Activated CD4-positive, alpha-beta memory T cell treated with anti-CD3 and anti-CD28 coated beads for 36 hours (primary cell): ENCODE measurements at regions of chr5 and their contacts with region 1.

Region 1: DNA sequence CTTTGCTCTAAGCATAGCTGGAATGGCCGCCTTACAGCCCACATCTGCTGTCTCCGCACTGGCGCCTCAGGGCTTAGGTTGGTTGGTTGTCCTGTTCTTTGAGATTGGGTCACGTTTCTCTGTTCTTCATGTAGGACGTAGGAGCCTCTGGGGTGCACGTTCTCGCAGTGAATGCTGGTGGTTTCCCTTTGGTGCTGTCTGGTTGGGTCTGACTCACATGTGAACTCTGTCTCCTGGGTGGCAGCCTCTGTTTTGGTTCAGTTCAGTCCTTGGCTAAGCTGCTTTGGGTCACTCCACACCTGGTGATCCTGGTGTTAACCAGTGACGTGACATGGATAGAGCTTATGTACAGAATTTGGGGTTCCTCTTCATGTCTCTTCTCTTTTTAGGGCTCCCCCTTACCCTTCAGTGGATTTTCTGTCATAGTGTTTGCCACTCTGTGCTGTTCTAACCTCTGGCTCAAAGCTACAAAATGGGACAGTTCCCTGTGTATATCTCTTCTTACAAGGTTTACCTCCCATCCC is 12.6 kb upstream of the LPCAT1 start:
- DNase-seq: peak; percentile 86
- H3K4me3 Mint-ChIP-seq: peak overlapping the region; percentile 71
- H3K27ac Mint-ChIP-seq: peak overlapping the region; percentile 78
- H3K4me1 Mint-ChIP-seq: peaks cover 21% of the 10 kb centered on the region
- H3K27me3 Mint-ChIP-seq: no peaks in the 10 kb centered on the region

Region 2: GRCh38 chr5:892394-893136 is 643.8 kb before region 1 on chr5 and contains the starts of genes BRD9 and TRIP13:
- CTCF ChIA-PET with region 1: no interaction called
- POLR2A ChIA-PET with region 1: no interaction called
- intact Hi-C with region 1: no loop called
- DNase-seq: peak; percentile 89
- H3K4me3 Mint-ChIP-seq: peak within 1 kb of the TSS; percentile 85
- H3K27ac Mint-ChIP-seq: peak within 1 kb of the TSS; percentile 84
- H3K4me1 Mint-ChIP-seq: peaks cover 25% of the 10 kb centered on the region
- H3K27me3 Mint-ChIP-seq: no peaks in the 10 kb centered on the region
- total RNA-seq, gene BRD9: 43.1 to 50.7 TPM
- total RNA-seq, gene TRIP13: 32.4 to 33.9 TPM

Region 3: DNA sequence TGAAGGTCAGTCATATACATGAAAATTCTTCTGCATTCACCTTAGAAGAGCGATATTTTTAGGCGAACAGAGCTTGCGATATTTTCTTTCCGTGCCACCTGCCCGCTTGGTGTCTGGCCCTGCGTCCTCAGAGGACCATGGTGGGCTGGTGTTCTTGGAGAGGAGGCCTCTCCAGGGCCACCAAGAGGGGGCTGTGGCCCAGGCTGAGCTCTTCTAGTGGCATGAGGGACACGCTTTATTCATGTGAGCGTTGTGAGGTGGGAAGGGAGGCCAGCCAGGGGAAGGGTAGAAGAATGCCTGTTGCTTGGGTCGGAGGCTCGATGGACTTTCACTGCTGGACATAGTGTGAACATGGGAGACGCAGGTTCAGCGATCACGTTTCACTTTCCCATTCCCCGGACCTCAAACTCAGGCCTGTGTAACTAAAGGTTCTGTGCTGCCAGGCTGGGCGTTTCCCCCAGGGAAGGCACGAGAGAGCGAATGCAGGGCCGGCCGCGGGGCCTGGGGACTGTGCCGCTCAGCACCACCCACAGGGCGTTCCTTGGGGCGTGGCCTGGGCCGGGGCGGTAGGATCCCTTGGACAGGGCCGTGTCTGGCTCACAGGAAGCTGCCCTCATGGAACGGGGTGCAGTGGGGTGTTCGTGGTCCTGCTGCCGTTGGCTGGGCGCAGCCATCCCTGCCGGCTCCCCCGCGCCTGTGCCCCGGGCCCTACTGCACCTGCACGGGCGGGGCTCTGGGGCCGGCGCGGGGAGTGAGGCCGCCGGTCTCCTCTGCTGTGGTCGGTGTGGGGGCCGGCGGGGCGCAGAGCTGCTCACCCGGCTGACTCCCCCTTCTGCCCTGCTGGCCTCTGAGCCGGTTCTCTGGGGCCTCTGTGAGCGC is 150.8 kb before region 1 on chr5:
- CTCF ChIA-PET with region 1: no interaction called
- POLR2A ChIA-PET with region 1: no interaction called
- intact Hi-C with region 1: loop called (anchors 10 kb)
- DNase-seq: peak; percentile 89
- H3K4me3 Mint-ChIP-seq: peak overlapping the region; percentile 92
- H3K27ac Mint-ChIP-seq: peak overlapping the region; percentile 92
- H3K4me1 Mint-ChIP-seq: peaks cover 23% of the 10 kb centered on the region
- H3K27me3 Mint-ChIP-seq: no peaks in the 10 kb centered on the region

Region 4: GRCh38 chr5:1488943-1489680 is 47.3 kb before region 1 on chr5:
- CTCF ChIA-PET with region 1: no interaction called
- POLR2A ChIA-PET with region 1: no interaction called
- intact Hi-C with region 1: loop called (anchors 1 kb)
- DNase-seq: peak; percentile 80
- H3K4me3 Mint-ChIP-seq: no peak overlapping the region
- H3K27ac Mint-ChIP-seq: peak overlapping the region; percentile 80
- H3K4me1 Mint-ChIP-seq: peaks cover 32% of the 10 kb centered on the region
- H3K27me3 Mint-ChIP-seq: no peaks in the 10 kb centered on the region

Region 5: GRCh38 chr5:1523771-1524480 is 12.5 kb before region 1 on chr5 and contains the start of gene LPCAT1:
- CTCF ChIA-PET with region 1: interaction called, 5 read pairs
- POLR2A ChIA-PET with region 1: interaction called, 8 read pairs
- intact Hi-C with region 1: loop called (anchors 1 kb)
- DNase-seq: peak; percentile 81
- H3K4me3 Mint-ChIP-seq: peak within 1 kb of the TSS; percentile 86
- H3K27ac Mint-ChIP-seq: peak within 1 kb of the TSS; percentile 66
- H3K4me1 Mint-ChIP-seq: peaks cover 33% of the 10 kb centered on the region
- H3K27me3 Mint-ChIP-seq: no peaks in the 10 kb centered on the region
- total RNA-seq, gene LPCAT1: 48.4 to 51.4 TPM

Region 6: DNA sequence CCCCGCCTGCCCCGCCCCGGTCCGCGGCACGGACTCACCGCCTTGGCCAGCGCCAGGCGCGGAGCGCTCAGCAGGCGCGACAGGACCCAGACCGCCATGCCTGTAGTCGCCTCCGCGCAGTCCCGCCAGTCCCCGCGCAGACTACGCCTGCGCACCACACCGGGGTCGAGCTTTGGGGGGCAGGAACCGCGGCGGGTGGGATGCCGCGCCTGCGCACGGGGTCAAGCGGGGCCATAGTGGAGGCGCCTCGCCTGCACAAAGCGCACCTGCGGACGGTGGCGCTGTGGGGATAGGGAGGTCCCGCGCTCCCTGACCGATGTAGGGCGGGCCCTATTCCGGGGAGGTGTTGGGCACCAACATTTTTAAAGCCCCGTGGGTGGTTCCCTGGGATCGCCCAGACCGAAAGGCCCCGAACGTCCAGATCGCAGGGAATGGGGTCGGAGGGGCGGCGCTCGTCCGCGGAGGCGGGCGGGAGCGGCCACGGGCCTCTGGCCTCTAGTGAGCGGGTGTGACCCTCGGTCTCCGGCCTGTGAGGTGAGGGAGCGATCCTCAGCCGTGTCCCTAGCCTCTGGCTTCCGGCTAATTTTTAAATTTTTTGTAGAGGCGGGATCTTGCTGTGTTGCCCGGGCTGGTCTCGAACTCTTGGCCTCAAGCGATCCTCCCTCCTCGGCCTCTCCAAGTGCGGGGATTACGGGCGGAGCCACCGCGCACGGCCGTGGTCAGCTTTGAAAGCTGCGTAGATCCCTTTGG is 58.1 kb after region 1 on chr5:
- CTCF ChIA-PET with region 1: interaction called, 3 read pairs
- POLR2A ChIA-PET with region 1: no interaction called
- intact Hi-C with region 1: loop called (anchors 10 kb)
- DNase-seq: peak; percentile 80
- H3K4me3 Mint-ChIP-seq: peak overlapping the region; percentile 71
- H3K27ac Mint-ChIP-seq: no peak overlapping the region
- H3K4me1 Mint-ChIP-seq: peaks cover 6% of the 10 kb centered on the region
- H3K27me3 Mint-ChIP-seq: no peaks in the 10 kb centered on the region